PC-3 (cell line): ENCODE measurements at regions of chr15 and their contacts with region 1.

Region 1: DNA sequence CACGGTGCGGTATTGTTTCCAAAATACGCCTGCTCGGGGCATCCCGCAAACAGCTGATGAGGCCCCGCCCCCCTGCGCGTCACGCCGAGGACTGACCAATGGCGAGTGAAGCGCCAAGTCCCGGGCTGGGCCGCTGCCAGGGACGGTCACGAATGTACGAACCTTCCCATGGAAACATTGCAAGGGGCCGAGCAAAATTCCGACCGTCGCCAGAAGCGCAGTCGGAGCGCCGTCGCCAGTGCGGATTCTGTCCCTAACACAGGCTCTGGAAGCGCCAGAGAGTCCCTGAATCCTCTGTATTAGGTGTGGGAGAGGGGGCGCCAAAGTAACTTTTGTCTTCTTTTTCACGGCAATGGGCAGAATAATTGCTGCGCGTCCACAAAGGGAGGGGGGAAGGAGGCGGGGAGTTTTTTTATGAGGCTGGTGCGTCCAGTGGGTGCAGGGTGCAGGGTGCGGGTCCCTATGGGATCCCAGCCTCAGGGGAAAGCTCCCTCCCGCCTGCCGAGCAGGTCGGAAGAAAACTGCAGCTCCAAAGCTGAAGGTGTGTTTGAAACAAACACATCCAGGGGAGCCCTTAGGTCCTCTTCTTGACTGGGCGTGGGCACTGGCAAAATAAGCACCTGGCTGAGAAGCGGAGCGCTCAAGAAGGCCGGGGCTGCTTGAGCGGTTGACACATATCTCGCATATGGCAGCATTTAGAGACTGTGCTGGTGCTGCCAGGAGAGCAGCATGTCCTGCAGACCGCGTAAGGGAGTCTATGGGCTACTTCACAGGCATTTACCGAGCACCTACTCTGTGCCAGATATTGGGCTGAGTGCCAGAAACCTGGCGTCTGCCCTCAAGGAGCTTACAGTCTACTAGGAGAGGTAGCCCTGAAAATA is at the start of gene BMF:
- DNase-seq: peak; percentile 100
- ATAC-seq: peak; percentile 75
- H3K4me3 ChIP-seq: peak within 1 kb of the TSS; percentile 82
- H3K27ac ChIP-seq: peak within 1 kb of the TSS; percentile 50
- H3K4me1 ChIP-seq: peaks cover 48% of the 10 kb centered on the region
- H3K27me3 ChIP-seq: no peaks in the 10 kb centered on the region
- CTCF ChIP-seq: peak; percentile 68
- total RNA-seq, gene BMF: 0.95 and 5.2 TPM in 2 replicates

Region 2: GRCh38 chr15:39896846-39897245 is 212.2 kb before region 1 on chr15:
- CTCF ChIA-PET with region 1: no interaction called
- POLR2A ChIA-PET with region 1: no interaction called
- intact Hi-C with region 1: no loop called
- DNase-seq: no peak
- ATAC-seq: no peak
- H3K4me3 ChIP-seq: no peak overlapping the region
- H3K27ac ChIP-seq: no peak overlapping the region
- H3K4me1 ChIP-seq: no peaks in the 10 kb centered on the region; the same call in 1 of the 2 replicates
- H3K27me3 ChIP-seq: no peaks in the 10 kb centered on the region
- CTCF ChIP-seq: no peak

Region 3: DNA sequence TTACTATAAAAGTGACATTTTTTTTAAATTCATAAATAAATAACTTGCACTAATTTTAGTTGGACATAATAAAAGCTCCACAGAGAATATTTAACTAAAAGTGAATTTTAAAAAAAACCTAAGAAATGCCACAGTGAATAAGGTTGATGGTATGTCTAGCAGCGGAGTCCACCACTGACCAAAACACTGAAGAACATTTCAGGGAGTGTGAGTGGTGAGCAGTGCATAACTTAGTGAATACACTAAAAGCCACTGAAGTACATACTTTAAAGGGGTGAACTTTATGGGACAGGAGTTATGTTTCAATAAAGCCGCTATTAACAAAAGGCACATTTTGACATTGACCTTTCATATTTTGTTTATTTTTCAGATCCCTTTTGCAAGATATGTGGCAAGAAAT is 102.4 kb before region 1 on chr15:
- CTCF ChIA-PET with region 1: no interaction called
- POLR2A ChIA-PET with region 1: interaction called, 13 read pairs
- intact Hi-C with region 1: no loop called
- DNase-seq: no peak
- ATAC-seq: no peak
- H3K4me3 ChIP-seq: no peak overlapping the region
- H3K27ac ChIP-seq: no peak overlapping the region
- H3K4me1 ChIP-seq: peaks cover 16% of the 10 kb centered on the region; the same call in 1 of the 2 replicates
- H3K27me3 ChIP-seq: no peaks in the 10 kb centered on the region
- CTCF ChIP-seq: no peak

Region 4: GRCh38 chr15:40054605-40055545 is 54.2 kb before region 1 on chr15:
- CTCF ChIA-PET with region 1: no interaction called
- POLR2A ChIA-PET with region 1: no interaction called
- intact Hi-C with region 1: no loop called
- DNase-seq: peak; percentile 67
- ATAC-seq: peak; percentile 72
- H3K4me3 ChIP-seq: no peak overlapping the region
- H3K27ac ChIP-seq: peak overlapping the region; percentile 37
- H3K4me1 ChIP-seq: peaks cover 24% of the 10 kb centered on the region
- H3K27me3 ChIP-seq: no peaks in the 10 kb centered on the region
- CTCF ChIP-seq: no peak

Region 5: DNA sequence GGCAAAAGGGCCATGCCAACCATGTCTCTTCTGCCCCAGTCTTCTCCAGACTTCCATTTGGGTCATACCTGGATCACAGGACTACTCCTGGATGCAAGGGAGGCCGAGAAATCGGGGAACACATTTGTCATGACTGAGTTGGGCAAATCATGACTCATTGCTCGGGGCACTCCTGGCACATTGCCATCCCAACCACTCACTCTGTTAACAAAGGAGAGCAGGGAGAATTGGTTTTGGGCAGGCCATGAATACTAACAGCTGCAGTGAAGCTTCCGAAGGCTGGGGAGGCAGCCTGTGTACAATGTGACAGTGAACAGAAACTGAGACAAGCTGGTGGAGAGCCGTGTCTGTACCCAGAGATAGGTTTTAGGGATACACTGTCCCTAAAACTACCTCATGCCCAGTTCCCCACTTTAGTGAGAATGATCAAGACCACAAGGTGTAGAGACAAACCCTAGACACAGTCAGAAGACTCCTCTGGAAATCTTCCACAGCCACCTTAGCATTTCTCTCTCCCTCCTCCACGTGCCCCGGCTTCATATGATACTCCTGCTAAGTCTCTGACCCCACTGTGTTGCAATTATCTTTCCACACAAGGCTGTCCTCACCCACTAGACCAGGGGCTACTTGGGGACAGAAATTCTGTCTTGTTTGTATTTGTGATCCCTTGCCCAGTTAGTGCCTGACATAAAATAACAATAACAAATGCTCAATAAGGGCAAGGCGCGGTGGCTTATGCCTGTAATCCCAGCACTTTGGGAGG is 41.2 kb after region 1 on chr15:
- CTCF ChIA-PET with region 1: no interaction called
- POLR2A ChIA-PET with region 1: no interaction called
- intact Hi-C with region 1: loop called (anchors 2 kb)
- DNase-seq: peak; percentile 98
- ATAC-seq: peak; percentile 78
- H3K4me3 ChIP-seq: peak overlapping the region; percentile 4; the same call in 1 of the 2 replicates
- H3K27ac ChIP-seq: peak overlapping the region; percentile 69
- H3K4me1 ChIP-seq: peaks cover 59% of the 10 kb centered on the region
- H3K27me3 ChIP-seq: no peaks in the 10 kb centered on the region
- CTCF ChIP-seq: no peak

Region 6: GRCh38 chr15:40190591-40190990 is 81.5 kb after region 1 on chr15:
- CTCF ChIA-PET with region 1: no interaction called
- POLR2A ChIA-PET with region 1: no interaction called
- intact Hi-C with region 1: loop called (anchors 1 kb)
- DNase-seq: peak; percentile 71
- ATAC-seq: peak; percentile 98
- H3K4me3 ChIP-seq: no peak overlapping the region
- H3K27ac ChIP-seq: peak overlapping the region; percentile 21; the same call in 1 of the 2 replicates
- H3K4me1 ChIP-seq: peaks cover 10% of the 10 kb centered on the region
- H3K27me3 ChIP-seq: no peaks in the 10 kb centered on the region
- CTCF ChIP-seq: no peak

Region 7: GRCh38 chr15:40204100-40204499 is 95.0 kb after region 1 on chr15:
- CTCF ChIA-PET with region 1: no interaction called
- POLR2A ChIA-PET with region 1: no interaction called
- intact Hi-C with region 1: no loop called
- DNase-seq: no peak
- ATAC-seq: no peak
- H3K4me3 ChIP-seq: no peak overlapping the region
- H3K27ac ChIP-seq: no peak overlapping the region
- H3K4me1 ChIP-seq: no peaks in the 10 kb centered on the region
- H3K27me3 ChIP-seq: no peaks in the 10 kb centered on the region
- CTCF ChIP-seq: no peak

Region 8: GRCh38 chr15:40274350-40275274 is 165.5 kb after region 1 on chr15:
- CTCF ChIA-PET with region 1: interaction called, 3 read pairs
- POLR2A ChIA-PET with region 1: no interaction called
- intact Hi-C with region 1: loop called (anchors 1 kb)
- DNase-seq: peak; percentile 88
- ATAC-seq: peak; percentile 63
- H3K4me3 ChIP-seq: no peak overlapping the region
- H3K27ac ChIP-seq: no peak overlapping the region
- H3K4me1 ChIP-seq: no peaks in the 10 kb centered on the region
- H3K27me3 ChIP-seq: no peaks in the 10 kb centered on the region
- CTCF ChIP-seq: peak; percentile 100